ENCODE measurements at regions of chr12 and their contacts with region 1.

Region 1: GRCh38 chr12:50174971-50175715 is 8.0 kb upstream of the CERS5 start:
- DNase-seq: peak; percentile 64
- H3K4me3 ChIP-seq: no peak overlapping the region
- H3K27ac ChIP-seq: peak overlapping the region in 1 of 2 experiments; percentile 41; a peak in 1 of 4 replicates
- H3K4me1 ChIP-seq: no peaks in the 10 kb centered on the region
- H3K27me3 ChIP-seq: no peaks in the 10 kb centered on the region
- CTCF ChIP-seq: peak; percentile 74
- EP300 ChIP-seq: no peak
- RAD21 ChIP-seq: peak; percentile 86

Region 2: GRCh38 chr12:50016501-50017475 is 158.4 kb before region 1 on chr12:
- CTCF ChIA-PET with region 1: no interaction called
- POLR2A ChIA-PET with region 1: no interaction called
- DNase-seq: no peak
- H3K4me3 ChIP-seq: no peak overlapping the region
- H3K27ac ChIP-seq: peak overlapping the region; percentile 55 to 58
- H3K4me1 ChIP-seq: peaks cover 3 to 7% of the 10 kb centered on the region in 2 experiments; a peak in 3 of 4 replicates
- H3K27me3 ChIP-seq: no peaks in the 10 kb centered on the region
- CTCF ChIP-seq: no peak
- EP300 ChIP-seq: no peak
- RAD21 ChIP-seq: peak; percentile 26; the same call in 1 of the 2 replicates

Region 3: GRCh38 chr12:50084775-50085614 is 90.1 kb before region 1 on chr12 and contains the start of gene SMARCD1:
- CTCF ChIA-PET with region 1: interaction called, 20 read pairs
- POLR2A ChIA-PET with region 1: interaction called, 3 read pairs
- DNase-seq: peak; percentile 98
- H3K4me3 ChIP-seq: peak within 1 kb of the TSS; percentile 77 to 79
- H3K27ac ChIP-seq: peak within 1 kb of the TSS; percentile 87 to 91
- H3K4me1 ChIP-seq: peaks cover 18 to 22% of the 10 kb centered on the region in 2 experiments
- H3K27me3 ChIP-seq: no peaks in the 10 kb centered on the region
- CTCF ChIP-seq: peak; percentile 67
- EP300 ChIP-seq: no peak
- RAD21 ChIP-seq: no peak
- polyA plus RNA-seq, gene SMARCD1: 58.5 and 77.2 TPM in 2 replicates

Region 4: GRCh38 chr12:50103767-50104321 is 71.3 kb before region 1 on chr12 and contains the start of gene GPD1:
- CTCF ChIA-PET with region 1: interaction called, 17 read pairs
- POLR2A ChIA-PET with region 1: no interaction called
- DNase-seq: peak; percentile 74
- H3K4me3 ChIP-seq: no peak within 1 kb of the TSS
- H3K27ac ChIP-seq: peak within 1 kb of the TSS in 1 of 2 experiments; percentile 36; a peak in 1 of 4 replicates
- H3K4me1 ChIP-seq: peaks cover 0 to 23% of the 10 kb centered on the region in 2 experiments; a peak in 1 of 4 replicates
- H3K27me3 ChIP-seq: no peaks in the 10 kb centered on the region
- CTCF ChIP-seq: no peak
- EP300 ChIP-seq: no peak
- RAD21 ChIP-seq: no peak
- polyA plus RNA-seq, gene GPD1: 0.07 and 0.26 TPM in 2 replicates

Region 5: GRCh38 chr12:50111693-50112455 is 63.3 kb before region 1 on chr12 and contains the start of gene COX14:
- CTCF ChIA-PET with region 1: interaction called, 23 read pairs
- POLR2A ChIA-PET with region 1: no interaction called
- DNase-seq: peak; percentile 96
- H3K4me3 ChIP-seq: peak within 1 kb of the TSS; percentile 67 to 99
- H3K27ac ChIP-seq: peak within 1 kb of the TSS; percentile 69 to 95
- H3K4me1 ChIP-seq: peaks cover 12 to 18% of the 10 kb centered on the region in 2 experiments; a peak in 2 of 4 replicates
- H3K27me3 ChIP-seq: no peaks in the 10 kb centered on the region
- CTCF ChIP-seq: peak; percentile 98
- EP300 ChIP-seq: no peak
- RAD21 ChIP-seq: peak; percentile 49
- polyA plus RNA-seq, gene COX14: 204 and 218 TPM in 2 replicates

Region 6: GRCh38 chr12:50132505-50133135 is 42.5 kb before region 1 on chr12:
- CTCF ChIA-PET with region 1: interaction called, 24 read pairs
- POLR2A ChIA-PET with region 1: no interaction called
- DNase-seq: peak; percentile 38
- H3K4me3 ChIP-seq: no peak overlapping the region; a peak in 1 of 4 replicates
- H3K27ac ChIP-seq: 0 out of 4 replicates have a peak overlapping the region, but pooled peaks of 1 of the 2 experiments have one; percentile 19
- H3K4me1 ChIP-seq: peaks cover 3 to 10% of the 10 kb centered on the region in 2 experiments; a peak in 3 of 4 replicates
- H3K27me3 ChIP-seq: no peaks in the 10 kb centered on the region
- CTCF ChIP-seq: peak; percentile 80
- EP300 ChIP-seq: no peak
- RAD21 ChIP-seq: peak; percentile 70

Region 7: GRCh38 chr12:50187084-50187900 is 12.1 kb after region 1 on chr12:
- CTCF ChIA-PET with region 1: interaction called, 24 read pairs
- POLR2A ChIA-PET with region 1: no interaction called
- DNase-seq: no peak
- H3K4me3 ChIP-seq: no peak overlapping the region
- H3K27ac ChIP-seq: peak overlapping the region; percentile 72 to 93; a peak in 3 of 4 replicates
- H3K4me1 ChIP-seq: peaks cover 8 to 51% of the 10 kb centered on the region in 2 experiments
- H3K27me3 ChIP-seq: no peaks in the 10 kb centered on the region
- CTCF ChIP-seq: no peak
- EP300 ChIP-seq: peak in 1 of 2 experiments; percentile 85; a peak in 2 of 4 replicates
- RAD21 ChIP-seq: no peak

Region 8: GRCh38 chr12:50603817-50604639 is 428.9 kb after region 1 on chr12:
- CTCF ChIA-PET with region 1: no interaction called
- POLR2A ChIA-PET with region 1: no interaction called
- DNase-seq: no peak
- H3K4me3 ChIP-seq: no peak overlapping the region
- H3K27ac ChIP-seq: peak overlapping the region in 1 of 2 experiments; percentile 36; a peak in 1 of 4 replicates
- H3K4me1 ChIP-seq: peaks cover 0 to 16% of the 10 kb centered on the region in 2 experiments; a peak in 2 of 4 replicates
- H3K27me3 ChIP-seq: no peaks in the 10 kb centered on the region
- CTCF ChIP-seq: no peak
- EP300 ChIP-seq: no peak
- RAD21 ChIP-seq: no peak

Measured in SK-N-SH (cell line).